ENCODE measurements at regions of chr1 and their contacts with region 1.

Region 1: DNA sequence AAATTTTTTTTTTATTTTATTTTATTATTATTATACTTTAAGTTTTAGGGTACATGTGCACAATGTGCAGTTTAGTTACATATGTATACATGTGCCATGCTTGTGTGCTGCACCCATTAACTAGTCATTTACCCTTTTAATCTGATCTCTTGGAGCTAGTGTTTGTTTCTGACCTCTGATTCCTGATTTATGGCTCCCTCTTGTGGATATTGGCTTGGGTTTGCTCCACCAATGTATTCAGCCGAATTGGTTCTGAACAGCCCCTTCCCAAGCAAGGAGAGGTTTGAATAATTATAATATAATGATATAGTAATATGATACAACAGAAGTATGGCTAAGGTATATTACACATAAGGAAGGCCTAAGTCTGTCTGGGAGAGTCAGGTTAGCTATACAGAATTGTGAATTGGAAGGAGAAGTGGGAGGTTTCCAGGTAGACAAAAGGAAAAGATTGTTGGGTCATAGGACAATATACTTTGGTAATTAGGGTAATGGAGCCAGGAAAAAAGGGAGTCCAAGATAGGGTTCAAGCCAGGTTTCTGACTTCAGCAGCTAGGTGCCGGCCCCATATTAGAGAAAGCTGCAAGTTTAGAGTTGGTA is 53.1 kb upstream of the HMCN1 start:
- DNase-seq: no peak
- ATAC-seq: peak; percentile 67
- H3K4me3 Mint-ChIP-seq: no peak overlapping the region
- H3K27ac Mint-ChIP-seq: no peak overlapping the region
- H3K4me1 Mint-ChIP-seq: peaks cover 19% of the 10 kb centered on the region
- H3K27me3 Mint-ChIP-seq: no peaks in the 10 kb centered on the region
- CTCF ChIP-seq: peak; percentile 50

Region 2: GRCh38 chr1:185170291-185170848 is 510.8 kb before region 1 on chr1:
- CTCF ChIA-PET with region 1: interaction called, 24 read pairs
- POLR2A ChIA-PET with region 1: no interaction called
- intact Hi-C with region 1: no loop called
- DNase-seq: peak; percentile 30
- ATAC-seq: peak; percentile 83
- H3K4me3 Mint-ChIP-seq: peak overlapping the region; percentile 19
- H3K27ac Mint-ChIP-seq: no peak overlapping the region
- H3K4me1 Mint-ChIP-seq: peaks cover 8% of the 10 kb centered on the region
- H3K27me3 Mint-ChIP-seq: no peaks in the 10 kb centered on the region
- CTCF ChIP-seq: peak; percentile 82

Region 3: DNA sequence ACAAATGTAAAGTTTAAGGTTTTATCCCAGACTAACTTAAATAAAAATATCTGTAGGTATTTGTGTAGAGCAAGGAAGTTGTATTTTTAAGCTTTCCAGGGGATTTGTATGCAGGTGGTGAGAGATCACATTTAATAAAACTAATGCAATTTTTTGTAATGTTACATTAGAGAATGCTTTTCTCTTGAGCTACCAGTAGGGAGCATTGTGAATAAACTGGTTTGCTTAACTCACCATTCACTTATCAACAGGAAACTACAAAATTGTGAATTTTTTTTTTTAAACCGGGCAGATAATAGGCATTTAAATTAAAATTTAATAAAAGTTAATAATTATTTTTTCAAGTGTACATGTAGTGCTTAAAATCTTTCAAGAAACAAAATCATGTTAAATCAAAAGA is 442.7 kb before region 1 on chr1:
- CTCF ChIA-PET with region 1: interaction called, 44 read pairs
- POLR2A ChIA-PET with region 1: interaction called, 4 read pairs
- intact Hi-C with region 1: loop called (anchors 1 kb)
- DNase-seq: no peak
- ATAC-seq: no peak
- H3K4me3 Mint-ChIP-seq: no peak overlapping the region
- H3K27ac Mint-ChIP-seq: no peak overlapping the region
- H3K4me1 Mint-ChIP-seq: no peaks in the 10 kb centered on the region
- H3K27me3 Mint-ChIP-seq: no peaks in the 10 kb centered on the region
- CTCF ChIP-seq: no peak

Region 4: GRCh38 chr1:185291652-185292051 is 389.5 kb before region 1 on chr1:
- CTCF ChIA-PET with region 1: interaction called, 10 read pairs
- POLR2A ChIA-PET with region 1: no interaction called
- intact Hi-C with region 1: no loop called
- DNase-seq: no peak
- ATAC-seq: peak; percentile 47
- H3K4me3 Mint-ChIP-seq: no peak overlapping the region
- H3K27ac Mint-ChIP-seq: peak overlapping the region; percentile 53
- H3K4me1 Mint-ChIP-seq: peaks cover 26% of the 10 kb centered on the region
- H3K27me3 Mint-ChIP-seq: no peaks in the 10 kb centered on the region
- CTCF ChIP-seq: no peak